IMR-90 (cell line): ENCODE measurements at regions of chr6 and their contacts with region 1.

Region 1: DNA sequence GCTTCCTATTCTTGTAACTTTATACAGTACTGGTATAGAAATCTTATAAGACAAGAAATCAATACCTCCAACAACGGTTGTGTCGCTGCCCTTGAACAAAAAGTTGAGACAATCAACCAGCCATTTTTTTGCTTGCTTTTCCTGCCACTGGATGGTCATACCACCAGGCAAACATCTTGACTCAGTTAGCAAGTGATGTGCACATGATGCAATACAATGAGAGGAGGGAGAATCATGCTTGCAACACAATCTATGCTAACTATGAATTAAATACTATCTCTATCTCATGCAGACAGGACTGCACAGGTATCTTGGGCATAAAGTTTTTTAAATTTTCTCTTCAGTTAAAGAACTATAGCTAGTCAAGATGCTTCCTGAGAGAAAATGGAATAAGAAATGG is 877.7 kb upstream of the CITED2 start:
- DNase-seq: peak; percentile 5
- ATAC-seq: no peak
- H3K4me3 ChIP-seq: no peak overlapping the region
- H3K27ac ChIP-seq: no peak overlapping the region
- H3K4me1 ChIP-seq: no peaks in the 10 kb centered on the region; the same call in 1 of the 2 replicates
- H3K27me3 ChIP-seq: no peaks in the 10 kb centered on the region
- CTCF ChIP-seq: no peak
- POLR2A ChIP-seq: no peak
- RAD21 ChIP-seq: no peak

Region 2: DNA sequence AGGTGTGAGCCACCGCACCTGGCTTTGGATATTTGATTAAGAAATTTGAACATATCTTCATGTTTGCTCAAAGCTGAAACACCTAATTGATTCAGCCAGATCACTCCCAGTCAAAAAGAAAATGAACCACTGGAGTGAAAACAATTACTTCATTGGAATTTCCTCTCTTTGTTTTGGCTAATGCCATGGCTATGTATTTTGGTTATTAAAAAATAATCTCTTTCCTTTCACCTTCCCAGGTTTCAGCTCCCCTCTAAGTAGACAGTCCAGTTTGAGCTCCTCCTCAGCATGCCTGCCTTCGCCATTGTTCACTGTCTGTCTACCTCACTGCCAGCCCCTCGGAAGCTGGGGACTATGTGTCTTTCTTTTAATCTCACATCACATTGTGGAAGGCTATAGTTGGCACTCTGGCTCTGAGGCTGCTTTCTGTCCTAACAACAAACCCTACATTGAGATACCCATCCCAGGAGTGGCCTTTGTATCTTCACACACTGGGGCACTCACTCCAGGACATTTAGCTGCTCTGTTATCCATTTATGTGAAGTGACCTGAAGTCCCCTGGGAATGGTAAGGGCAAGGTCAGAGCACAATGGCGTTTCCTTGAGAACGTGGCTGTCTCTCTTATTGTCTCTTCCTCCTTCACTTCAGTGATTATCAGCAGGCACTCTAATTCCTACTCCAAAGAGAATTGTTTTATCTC is 113.6 kb before region 1 on chr6:
- CTCF ChIA-PET with region 1: no interaction called
- POLR2A ChIA-PET with region 1: interaction called, 14 read pairs
- dilution Hi-C with region 1: no loop called
- in situ Hi-C with region 1: no loop called
- intact Hi-C with region 1: no loop called
- DNase-seq: no peak
- ATAC-seq: no peak
- H3K4me3 ChIP-seq: no peak overlapping the region
- H3K27ac ChIP-seq: no peak overlapping the region
- H3K4me1 ChIP-seq: no peaks in the 10 kb centered on the region
- H3K27me3 ChIP-seq: no peaks in the 10 kb centered on the region
- CTCF ChIP-seq: no peak
- POLR2A ChIP-seq: no peak
- RAD21 ChIP-seq: no peak